ENCODE measurements at regions of chr19 and their contacts with region 1.

Region 1: GRCh38 chr19:12890787-12891552 is at the start of gene GCDH:
- DNase-seq: peak; percentile 87
- ATAC-seq: peak; percentile 99
- H3K4me3 ChIP-seq: peak within 1 kb of the TSS; percentile 85 to 94
- H3K27ac ChIP-seq: peak within 1 kb of the TSS; percentile 44; the same call in 1 of the 2 replicates
- H3K4me1 ChIP-seq: no peaks in the 10 kb centered on the region; the same call in 1 of the 2 replicates
- H3K27me3 ChIP-seq: no peaks in the 10 kb centered on the region
- CTCF ChIP-seq: no peak
- total RNA-seq, gene GCDH: 15.6 TPM

Region 2: DNA sequence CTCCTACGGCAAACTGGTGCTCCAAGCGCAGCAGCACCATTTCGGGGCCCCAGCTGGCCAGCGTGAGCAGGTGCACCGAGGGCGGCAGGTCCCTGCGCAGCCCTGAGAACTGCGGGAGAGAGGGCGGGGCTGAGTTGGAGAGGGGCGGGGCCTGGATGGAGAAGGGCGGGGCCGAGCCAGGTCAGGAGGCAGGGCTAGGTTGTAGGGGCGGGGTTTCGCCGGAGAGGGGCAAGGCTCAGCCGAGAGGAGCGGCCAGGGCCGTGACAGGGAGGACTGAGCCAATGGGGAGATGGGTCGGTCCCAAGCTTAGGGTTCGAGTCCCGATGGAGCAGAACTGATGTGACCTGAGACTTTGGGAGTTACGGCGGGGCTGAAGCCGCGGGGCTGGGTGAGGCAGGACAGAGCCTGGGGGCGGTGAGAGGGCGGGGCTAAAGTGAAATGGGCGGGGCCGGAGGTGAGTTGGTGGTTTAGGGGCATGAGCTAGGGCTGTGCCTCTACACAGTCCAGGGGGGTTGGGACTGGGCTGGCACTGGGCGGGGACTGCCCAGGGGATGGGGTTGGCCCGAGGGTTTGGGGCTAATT is 243.4 kb before region 1 on chr19:
- CTCF ChIA-PET with region 1: no interaction called
- POLR2A ChIA-PET with region 1: no interaction called
- in situ Hi-C with region 1: no loop called
- intact Hi-C with region 1: no loop called
- DNase-seq: no peak
- ATAC-seq: peak; percentile 80
- H3K4me3 ChIP-seq: no peak overlapping the region
- H3K27ac ChIP-seq: no peak overlapping the region
- H3K4me1 ChIP-seq: no peaks in the 10 kb centered on the region
- H3K27me3 ChIP-seq: no peaks in the 10 kb centered on the region
- CTCF ChIP-seq: no peak

Region 3: DNA sequence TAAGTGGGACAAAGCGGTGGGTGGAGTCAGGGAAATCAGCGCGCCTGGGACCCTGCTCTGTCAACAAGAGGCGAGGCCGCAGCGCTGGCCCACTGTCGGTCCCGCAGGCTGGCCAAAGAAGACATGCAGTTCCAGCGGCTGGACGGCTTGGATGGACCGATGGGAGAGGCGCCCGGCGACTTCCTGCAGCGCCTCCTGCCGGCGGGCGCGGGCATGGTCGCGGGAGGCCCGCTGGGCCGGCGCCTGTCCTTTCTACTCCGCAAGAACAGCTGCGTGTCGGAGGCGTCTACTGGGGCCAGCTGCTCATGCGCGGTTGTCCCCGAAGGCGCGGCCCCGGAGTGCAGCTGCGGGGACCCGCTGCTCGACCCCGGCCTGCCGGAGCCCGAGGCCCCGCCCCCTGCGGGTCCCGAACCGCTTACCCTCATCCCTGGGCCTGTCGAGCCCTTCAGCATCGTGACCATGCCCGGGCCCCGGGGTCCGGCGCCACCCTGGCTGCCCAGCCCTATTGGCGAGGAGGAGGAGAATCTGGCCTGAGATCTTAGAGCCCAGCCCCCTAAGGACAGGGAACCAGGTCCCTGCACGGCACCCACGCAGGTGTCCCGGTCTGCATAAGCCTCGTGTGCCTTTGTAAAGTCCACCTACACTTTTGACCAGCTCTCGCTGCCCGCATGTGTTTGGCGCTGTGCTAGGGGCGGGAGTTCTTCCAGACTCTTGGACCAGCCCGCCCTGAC is 133.3 kb before region 1 on chr19:
- CTCF ChIA-PET with region 1: no interaction called
- POLR2A ChIA-PET with region 1: no interaction called
- in situ Hi-C with region 1: no loop called
- intact Hi-C with region 1: no loop called
- DNase-seq: no peak
- ATAC-seq: peak; percentile 93
- H3K4me3 ChIP-seq: peak overlapping the region; percentile 44 to 55
- H3K27ac ChIP-seq: peak overlapping the region; percentile 59; the same call in 1 of the 2 replicates
- H3K4me1 ChIP-seq: no peaks in the 10 kb centered on the region
- H3K27me3 ChIP-seq: no peaks in the 10 kb centered on the region
- CTCF ChIP-seq: peak; percentile 96

Region 4: GRCh38 chr19:12913011-12913561 is 22.1 kb after region 1 on chr19:
- CTCF ChIA-PET with region 1: interaction called, 11 read pairs
- POLR2A ChIA-PET with region 1: no interaction called
- in situ Hi-C with region 1: no loop called
- intact Hi-C with region 1: no loop called
- DNase-seq: no peak
- ATAC-seq: no peak
- H3K4me3 ChIP-seq: no peak overlapping the region
- H3K27ac ChIP-seq: no peak overlapping the region
- H3K4me1 ChIP-seq: no peaks in the 10 kb centered on the region
- H3K27me3 ChIP-seq: no peaks in the 10 kb centered on the region
- CTCF ChIP-seq: no peak